ENCODE measurements at regions of chr2 and their contacts with region 1.

Region 1: GRCh38 chr2:86221066-86221684 is 21.9 kb downstream of the MRPL35 start:
- DNase-seq: peak; percentile 71
- H3K4me3 Mint-ChIP-seq: no peak overlapping the region
- H3K27ac Mint-ChIP-seq: no peak overlapping the region
- H3K4me1 Mint-ChIP-seq: peaks cover 9% of the 10 kb centered on the region
- H3K27me3 Mint-ChIP-seq: no peaks in the 10 kb centered on the region
- CTCF ChIP-seq: peak; percentile 90

Region 2: DNA sequence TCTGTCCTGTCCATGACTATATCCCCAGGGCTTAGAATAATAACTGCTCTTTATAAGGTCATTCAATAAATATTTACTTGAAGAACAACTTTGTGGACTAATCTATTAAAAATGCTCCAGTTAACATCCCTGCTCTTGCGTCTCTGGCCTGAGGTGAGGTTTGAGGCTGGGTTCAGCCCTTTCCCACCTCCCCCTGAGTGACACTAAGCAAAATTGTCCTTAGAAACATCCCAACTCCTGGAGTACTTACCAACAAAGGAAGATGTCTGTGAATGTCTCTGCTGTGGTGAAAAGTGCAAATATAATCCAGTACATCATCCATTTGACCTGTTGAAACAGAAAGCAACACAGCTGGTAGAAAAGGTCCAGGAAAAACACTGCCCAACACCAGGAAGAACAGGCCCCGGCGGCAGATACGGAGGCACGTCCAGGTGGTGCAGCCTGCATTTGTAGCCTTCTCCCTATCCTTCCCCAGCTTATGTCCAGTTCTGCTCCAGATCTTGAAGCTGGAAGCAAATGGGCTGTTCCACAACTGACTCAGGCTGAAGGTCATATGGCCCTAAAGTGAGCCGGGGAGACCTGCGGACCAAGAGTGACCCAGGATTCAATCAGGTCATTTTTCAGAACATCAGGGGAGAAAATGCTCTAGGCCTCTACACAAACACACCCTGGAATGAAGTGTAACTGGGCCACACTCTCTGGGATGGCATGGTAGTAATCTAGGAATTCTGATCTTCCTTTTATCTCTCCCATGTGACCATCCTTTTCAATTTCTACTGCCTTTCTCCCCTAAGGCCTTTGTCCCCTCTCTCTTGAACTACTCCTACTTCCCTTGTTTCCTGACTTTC is 42.8 kb after region 1 on chr2:
- CTCF ChIA-PET with region 1: no interaction called
- POLR2A ChIA-PET with region 1: no interaction called
- intact Hi-C with region 1: no loop called
- DNase-seq: no peak
- H3K4me3 Mint-ChIP-seq: no peak overlapping the region
- H3K27ac Mint-ChIP-seq: no peak overlapping the region
- H3K4me1 Mint-ChIP-seq: no peaks in the 10 kb centered on the region
- H3K27me3 Mint-ChIP-seq: peaks cover 16% of the 10 kb centered on the region
- CTCF ChIP-seq: no peak

Region 3: GRCh38 chr2:86298411-86299379 is 77.5 kb after region 1 on chr2:
- CTCF ChIA-PET with region 1: interaction called, 5 read pairs
- POLR2A ChIA-PET with region 1: no interaction called
- intact Hi-C with region 1: loop called (anchors 10 kb)
- DNase-seq: no peak
- H3K4me3 Mint-ChIP-seq: no peak overlapping the region
- H3K27ac Mint-ChIP-seq: no peak overlapping the region
- H3K4me1 Mint-ChIP-seq: no peaks in the 10 kb centered on the region
- H3K27me3 Mint-ChIP-seq: peaks cover 10% of the 10 kb centered on the region
- CTCF ChIP-seq: peak; percentile 10

Region 4: DNA sequence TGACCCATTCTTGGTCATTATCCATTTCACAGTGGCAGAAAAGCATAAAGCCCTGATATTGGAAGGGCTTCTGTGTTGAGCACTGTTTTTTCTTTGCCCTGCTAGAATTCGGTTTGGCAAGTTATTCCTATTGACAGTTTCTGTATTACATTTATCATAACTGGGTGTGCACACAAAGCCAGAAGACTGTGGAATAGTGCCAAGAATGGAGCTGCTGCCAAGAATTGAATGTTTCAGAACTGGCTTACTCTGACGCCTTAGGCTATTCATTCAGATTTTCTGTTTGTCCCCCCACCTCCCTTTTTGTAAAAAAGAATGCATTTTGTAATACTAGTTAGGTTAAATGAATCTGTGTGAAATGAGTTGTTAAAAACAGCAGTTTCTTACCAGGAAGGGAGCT is 232.7 kb after region 1 on chr2:
- CTCF ChIA-PET with region 1: interaction called, 11 read pairs
- POLR2A ChIA-PET with region 1: interaction called, 5 read pairs
- intact Hi-C with region 1: no loop called
- DNase-seq: peak; percentile 97
- H3K4me3 Mint-ChIP-seq: peak overlapping the region; percentile 44
- H3K27ac Mint-ChIP-seq: peak overlapping the region; percentile 84
- H3K4me1 Mint-ChIP-seq: peaks cover 19% of the 10 kb centered on the region
- H3K27me3 Mint-ChIP-seq: no peaks in the 10 kb centered on the region
- CTCF ChIP-seq: no peak

Region 5: DNA sequence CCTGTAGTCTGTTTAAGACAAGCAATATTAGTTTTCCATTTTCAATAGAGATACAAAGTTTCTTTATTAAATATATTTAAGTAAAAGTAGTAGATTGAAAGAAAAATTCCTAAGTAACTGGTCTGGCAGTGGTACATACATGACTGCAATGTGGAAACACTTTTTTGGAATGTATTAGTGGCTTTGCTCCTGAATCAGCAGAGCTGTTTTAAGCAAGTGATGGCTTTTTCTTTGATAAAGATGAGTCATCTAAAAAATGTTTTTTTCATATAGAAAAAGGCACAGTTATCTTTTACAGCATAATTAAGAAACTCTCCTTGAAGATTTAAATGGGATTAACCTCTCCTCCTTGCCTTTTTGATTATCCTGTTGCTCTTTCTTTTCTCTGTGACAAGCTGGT is 254.9 kb after region 1 on chr2:
- CTCF ChIA-PET with region 1: interaction called, 11 read pairs
- POLR2A ChIA-PET with region 1: interaction called, 3 read pairs
- intact Hi-C with region 1: no loop called
- DNase-seq: no peak
- H3K4me3 Mint-ChIP-seq: no peak overlapping the region
- H3K27ac Mint-ChIP-seq: no peak overlapping the region
- H3K4me1 Mint-ChIP-seq: peaks cover 5% of the 10 kb centered on the region
- H3K27me3 Mint-ChIP-seq: no peaks in the 10 kb centered on the region
- CTCF ChIP-seq: no peak

Measured in MCF 10A (cell line).